Pancreas (tissue), 10 donors: ENCODE measurements at regions of chr18 and their contacts with region 1.

Region 1: DNA sequence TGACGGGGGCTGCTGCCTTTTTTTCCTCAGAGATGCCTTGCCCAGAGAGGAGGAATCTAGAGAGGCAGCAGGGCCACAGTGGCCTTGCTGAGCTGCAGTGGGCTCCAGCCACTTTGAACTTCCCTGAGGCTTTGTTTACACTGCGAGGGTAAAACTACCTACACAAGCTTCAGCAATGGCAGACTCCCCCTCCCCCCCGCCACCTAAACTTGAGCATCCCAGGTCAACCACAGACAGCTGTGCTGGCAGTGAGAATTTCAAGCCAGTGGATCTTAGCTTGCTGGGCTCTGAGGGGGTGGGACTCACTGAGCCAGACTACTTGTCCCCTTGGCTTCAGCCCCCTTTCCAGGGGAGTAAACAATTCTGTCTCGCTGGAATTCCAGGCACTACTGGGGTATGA is 11.8 kb downstream of the SYT4 start:
- DNase-seq: no peak
- ATAC-seq: no peak
- H3K4me3 ChIP-seq: no peak overlapping the region
- H3K27ac ChIP-seq: no peak overlapping the region
- H3K4me1 ChIP-seq: no peaks in the 10 kb centered on the region
- H3K27me3 ChIP-seq: no peaks in the 10 kb centered on the region
- CTCF ChIP-seq: no peak

Region 2: GRCh38 chr18:42305869-42306593 is 959.4 kb before region 1 on chr18:
- intact Hi-C with region 1: loop called in 1 of 3 experiments (anchors 10 kb)
- DNase-seq: no peak
- ATAC-seq: no peak
- H3K4me3 ChIP-seq: no peak overlapping the region
- H3K27ac ChIP-seq: no peak overlapping the region
- H3K4me1 ChIP-seq: no peaks in the 10 kb centered on the region
- H3K27me3 ChIP-seq: no peaks in the 10 kb centered on the region
- CTCF ChIP-seq: no peak

Region 3: GRCh38 chr18:42586601-42587000 is 678.9 kb before region 1 on chr18:
- intact Hi-C with region 1: loop called in 1 of 3 experiments (anchors 10 kb)
- DNase-seq: no peak
- ATAC-seq: no peak
- H3K4me3 ChIP-seq: no peak overlapping the region
- H3K27ac ChIP-seq: no peak overlapping the region
- H3K4me1 ChIP-seq: no peaks in the 10 kb centered on the region
- H3K27me3 ChIP-seq: no peaks in the 10 kb centered on the region
- CTCF ChIP-seq: no peak

Region 4: GRCh38 chr18:43414006-43414405 is 148.5 kb after region 1 on chr18:
- intact Hi-C with region 1: no loop called
- DNase-seq: no peak
- ATAC-seq: no peak
- H3K4me3 ChIP-seq: no peak overlapping the region
- H3K27ac ChIP-seq: no peak overlapping the region
- H3K4me1 ChIP-seq: no peaks in the 10 kb centered on the region
- H3K27me3 ChIP-seq: peaks cover 0 to 6% (median 0%) of the 10 kb centered on the region in 4 donors
- CTCF ChIP-seq: no peak